ENCODE measurements at regions of chr1 and their contacts with region 1.

Region 1: DNA sequence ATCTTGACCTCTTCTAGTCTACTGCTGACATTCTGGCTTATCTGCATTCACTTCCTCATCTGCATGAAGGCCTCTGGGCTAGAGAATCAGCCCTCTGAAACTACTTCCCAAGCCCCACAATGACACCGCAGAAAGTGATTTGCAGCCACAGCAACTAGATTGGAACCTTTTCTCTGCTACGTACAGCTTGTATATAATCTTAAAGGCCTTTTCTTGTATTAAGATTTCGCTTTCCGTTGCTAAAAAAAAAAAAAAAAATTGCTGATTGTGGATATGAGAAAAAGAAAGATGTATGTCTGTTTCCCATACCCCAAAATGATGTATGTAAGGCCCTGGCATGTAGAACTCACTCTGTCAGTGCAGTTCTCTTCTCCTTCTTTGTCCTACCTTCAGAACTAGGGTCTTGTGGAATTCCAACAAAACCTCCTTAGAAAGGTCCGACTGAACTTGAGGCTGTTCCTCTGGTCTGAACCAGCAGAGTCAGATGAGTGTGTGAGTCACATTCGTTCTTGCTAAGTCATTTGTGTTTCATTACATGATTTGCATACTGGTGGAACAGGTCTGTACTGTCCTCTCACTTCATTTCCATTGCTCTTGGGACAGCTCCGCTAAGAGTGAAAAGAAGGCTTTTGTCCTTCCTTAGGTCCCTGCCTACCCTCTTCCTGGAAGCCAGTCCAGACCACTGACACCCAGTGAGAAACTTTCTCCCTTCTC is 62.7 kb downstream of the PLPP3 start:
- DNase-seq: no peak
- ATAC-seq: peak; percentile 27

Region 2: GRCh38 chr1:55860798-55861519 is 655.7 kb before region 1 on chr1:
- intact Hi-C with region 1: no loop called
- DNase-seq: no peak
- ATAC-seq: no peak

Region 3: DNA sequence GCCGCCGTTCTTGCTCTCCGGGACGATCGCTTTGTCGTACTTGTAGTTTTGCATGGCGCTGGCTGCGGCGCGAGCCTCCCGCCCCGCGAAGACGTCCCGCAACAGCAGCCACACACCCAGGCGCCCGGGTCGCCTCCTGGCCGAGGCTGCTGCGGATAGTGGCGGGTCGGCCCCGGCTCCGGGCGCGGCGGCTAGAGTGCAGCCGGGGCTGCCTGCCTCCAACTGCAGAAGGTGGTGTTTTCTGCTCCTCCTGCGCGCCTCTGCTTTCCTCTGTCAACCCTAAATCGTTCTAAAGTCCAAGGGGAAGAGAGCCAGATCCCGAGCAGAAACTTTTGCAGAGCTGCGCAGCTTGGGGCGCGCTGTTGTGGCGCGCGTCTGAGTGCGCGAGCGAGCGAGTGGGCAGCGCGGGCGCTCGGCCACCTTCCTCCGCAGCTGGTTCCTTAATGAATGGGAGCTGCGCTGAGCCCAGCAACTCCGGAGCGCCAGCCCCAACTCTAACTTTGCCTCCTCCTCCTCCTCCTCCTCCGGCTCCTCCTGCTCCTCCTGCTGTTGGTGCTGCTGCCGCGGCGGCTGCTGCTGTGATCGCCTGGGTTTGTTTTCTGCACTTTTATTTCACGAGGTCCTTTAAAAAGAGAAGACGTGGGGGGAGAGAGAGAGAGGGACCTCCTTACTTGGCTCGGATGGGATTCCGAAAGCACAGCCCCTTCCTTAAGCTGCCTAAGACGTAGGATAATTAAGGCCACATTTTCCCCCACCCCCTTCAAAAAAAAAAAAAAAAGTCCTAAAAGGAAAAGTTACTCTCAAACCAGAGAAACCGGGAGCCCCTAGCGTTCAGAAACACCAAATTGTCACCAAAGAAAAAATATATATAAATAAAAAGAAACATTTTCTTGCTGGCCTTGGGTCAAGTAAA is 62.5 kb after region 1 on chr1 and contains the start of gene PLPP3:
- intact Hi-C with region 1: loop called (anchors 10 kb)
- DNase-seq: peak; percentile 91
- ATAC-seq: peak; percentile 87
- total RNA-seq, gene PLPP3: 140 TPM

Measured in left ventricle myocardium superior (tissue), 1 donor.